Left colon (tissue), 2 donors: ENCODE measurements at regions of chr6 and their contacts with region 1.

Region 1: DNA sequence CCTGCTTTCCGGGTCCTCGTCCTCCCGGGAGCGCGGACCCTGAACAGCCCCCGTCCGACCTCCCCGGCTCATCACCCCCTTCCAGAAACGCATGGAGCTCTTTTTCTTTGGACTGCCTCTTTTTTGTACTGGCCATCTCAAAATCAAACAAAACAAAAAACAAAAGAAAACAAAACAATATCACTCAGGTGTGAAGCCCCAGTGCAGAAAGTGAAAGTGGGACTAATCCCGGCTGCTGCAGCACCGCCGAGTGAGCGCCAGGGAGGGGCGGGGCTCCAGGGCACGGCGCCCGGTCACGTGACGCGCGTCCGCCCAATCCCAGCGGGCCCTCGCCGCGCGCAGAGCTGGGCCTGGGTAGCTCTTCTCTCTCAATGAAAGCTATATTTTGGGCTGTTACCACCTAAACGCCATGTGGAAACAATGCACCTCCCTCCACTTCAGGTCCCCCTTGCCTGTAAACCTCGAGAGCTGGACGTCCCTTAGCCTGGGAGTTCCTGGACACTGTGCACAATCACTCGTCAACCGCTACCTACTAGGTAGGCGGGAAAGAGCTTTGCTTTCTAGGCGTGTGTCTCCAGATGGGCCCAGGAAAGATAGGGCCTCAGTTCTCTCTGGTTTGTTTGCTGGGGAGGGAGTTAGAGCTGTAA is 93.7 kb upstream of the PRDM1 start:
- DNase-seq: peak; percentile 85 to 91
- ATAC-seq: peak; percentile 96

Region 2: GRCh38 chr6:106085984-106086813 is 93.8 kb after region 1 on chr6 and contains the start of gene PRDM1:
- intact Hi-C with region 1: loop called in 1 of 2 experiments (anchors 10 kb)
- DNase-seq: peak; percentile 93
- ATAC-seq: peak; percentile 98
- total RNA-seq, gene PRDM1: 16.6 to 25.9 TPM